A549 (cell line): ENCODE measurements at regions of chr17 and their contacts with region 1.

Region 1: DNA sequence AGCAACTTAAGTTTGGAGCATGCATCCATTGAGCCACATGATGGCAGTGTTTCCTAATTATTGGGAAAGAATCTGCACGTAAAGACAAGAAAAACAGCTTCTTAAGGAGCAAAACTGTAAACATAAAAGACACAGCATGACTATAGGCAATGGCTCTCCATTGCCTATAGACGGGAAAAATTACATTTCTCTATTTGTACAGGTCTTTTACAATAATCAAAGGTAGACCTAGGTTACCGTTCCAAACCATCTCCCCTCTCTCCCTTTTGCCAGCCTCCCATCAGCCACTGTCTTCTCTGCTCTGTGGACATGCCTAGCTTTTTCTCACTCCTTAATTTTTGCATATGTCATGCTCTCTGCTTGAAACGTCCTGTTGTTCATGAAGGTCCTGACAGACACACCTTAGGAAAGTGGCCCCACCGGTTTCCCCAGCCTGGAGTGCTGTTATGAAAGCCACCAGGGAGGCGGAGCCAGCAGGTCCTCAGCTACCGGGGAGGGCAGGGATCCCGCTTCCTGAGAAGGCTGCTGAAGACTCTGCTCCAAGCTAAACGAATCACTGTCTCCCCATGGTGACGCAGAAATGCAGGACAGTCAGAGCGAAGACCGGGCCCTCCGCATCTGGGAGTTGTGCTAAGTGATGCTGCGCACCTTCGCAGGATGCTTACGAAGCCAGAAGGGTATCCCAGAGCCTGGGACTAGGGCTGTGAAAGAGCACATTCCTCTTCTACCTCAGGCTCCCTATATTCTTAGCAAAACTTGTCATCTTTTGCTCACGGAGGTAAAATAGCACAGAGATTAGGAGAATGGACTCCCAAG is 2.2 kb upstream of the SLC16A11 start:
- DNase-seq: peak; percentile 76 to 91
- ATAC-seq: peak; percentile 51 to 69
- H3K4me3 ChIP-seq: no peak overlapping the region
- H3K27ac ChIP-seq: peak overlapping the region in 1 of 2 experiments; percentile 12; a peak in 1 of 6 replicates
- H3K4me1 ChIP-seq: peaks cover 19% of the 10 kb centered on the region
- CTCF ChIP-seq: peak; percentile 99
- EP300 ChIP-seq: no peak
- POLR2A ChIP-seq: no peak
- RAD21 ChIP-seq: peak; percentile 98 to 99

Region 2: GRCh38 chr17:7014261-7014994 is 31.7 kb before region 1 on chr17:
- CTCF ChIA-PET with region 1: interaction called, 10 read pairs
- POLR2A ChIA-PET with region 1: no interaction called
- DNase-seq: peak; percentile 96 to 98
- ATAC-seq: peak; percentile 83 to 92
- H3K4me3 ChIP-seq: peak overlapping the region; percentile 81
- H3K27ac ChIP-seq: peak overlapping the region; percentile 90 to 99
- H3K4me1 ChIP-seq: peaks cover 25% of the 10 kb centered on the region
- CTCF ChIP-seq: peak; percentile 87
- EP300 ChIP-seq: no peak
- POLR2A ChIP-seq: peak; percentile 89
- RAD21 ChIP-seq: peak in 1 of 2 experiments; percentile 61; a peak in 3 of 5 replicates

Region 3: GRCh38 chr17:7035591-7036368 is 10.3 kb before region 1 on chr17 and contains the start of gene SLC16A13:
- CTCF ChIA-PET with region 1: interaction called, 132 read pairs
- POLR2A ChIA-PET with region 1: interaction called, 13 read pairs
- DNase-seq: peak; percentile 99 to 100
- ATAC-seq: peak; percentile 93 to 97
- H3K4me3 ChIP-seq: peak within 1 kb of the TSS; percentile 85
- H3K27ac ChIP-seq: peak within 1 kb of the TSS; percentile 86 to 97
- H3K4me1 ChIP-seq: peaks cover 13% of the 10 kb centered on the region; the same call in 2 of the 3 replicates
- CTCF ChIP-seq: no peak
- EP300 ChIP-seq: no peak
- POLR2A ChIP-seq: peak; percentile 96
- RAD21 ChIP-seq: no peak
- polyA plus RNA-seq, gene SLC16A13: 6.2 and 8.0 TPM in 2 replicates

Region 4: GRCh38 chr17:7095625-7096024 is 49.5 kb after region 1 on chr17:
- CTCF ChIA-PET with region 1: interaction called, 11 read pairs
- POLR2A ChIA-PET with region 1: no interaction called
- DNase-seq: no peak
- ATAC-seq: no peak
- H3K4me3 ChIP-seq: no peak overlapping the region
- H3K27ac ChIP-seq: no peak overlapping the region
- H3K4me1 ChIP-seq: peaks cover 6% of the 10 kb centered on the region
- CTCF ChIP-seq: no peak
- EP300 ChIP-seq: no peak
- POLR2A ChIP-seq: no peak
- RAD21 ChIP-seq: no peak

Region 5: DNA sequence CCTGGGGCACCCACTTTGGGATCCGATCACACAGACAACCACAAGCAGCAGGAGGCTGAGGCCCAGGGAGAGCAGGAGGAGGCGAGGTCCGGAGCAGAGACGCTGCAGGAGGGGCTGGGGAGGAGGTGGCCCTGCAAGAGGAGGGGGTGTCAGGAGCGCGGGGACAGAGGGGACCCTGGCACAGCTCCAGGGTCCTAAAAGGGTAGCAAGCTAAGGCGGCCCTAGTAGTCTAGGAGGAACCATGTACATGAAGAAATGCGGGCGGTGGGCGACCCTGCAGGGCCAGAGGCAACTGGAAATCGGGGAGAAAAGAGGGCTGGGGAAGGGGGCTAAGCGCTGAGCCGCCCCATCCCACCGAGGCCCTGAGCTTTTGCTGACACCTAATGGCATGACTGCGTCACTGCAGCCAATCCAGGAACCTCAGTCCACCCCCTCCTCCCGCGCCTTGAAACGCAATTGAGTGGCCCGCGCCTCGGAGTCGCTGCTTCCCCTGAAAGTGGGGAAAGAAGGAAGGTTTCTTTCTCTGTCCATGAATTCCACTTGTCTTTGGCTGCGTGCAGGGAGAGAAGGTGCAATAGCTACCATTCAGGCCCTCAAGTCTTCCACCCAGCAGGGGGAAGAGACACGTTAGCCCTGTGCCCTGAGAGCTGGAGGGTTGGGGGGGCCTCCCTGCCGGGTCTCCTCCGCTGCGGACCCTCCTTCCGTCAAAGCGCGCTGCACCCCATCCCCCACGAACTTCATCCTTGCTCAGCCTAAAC is 131.3 kb after region 1 on chr17:
- CTCF ChIA-PET with region 1: interaction called, 314 read pairs
- POLR2A ChIA-PET with region 1: interaction called, 7 read pairs
- DNase-seq: peak; percentile 72 to 95
- ATAC-seq: peak; percentile 84 to 92
- H3K4me3 ChIP-seq: peak overlapping the region; percentile 54
- H3K27ac ChIP-seq: peak overlapping the region; percentile 67 to 88
- H3K4me1 ChIP-seq: peaks cover 23% of the 10 kb centered on the region
- CTCF ChIP-seq: peak; percentile 88
- EP300 ChIP-seq: no peak
- POLR2A ChIP-seq: no peak
- RAD21 ChIP-seq: peak; percentile 90 to 94

Region 6: DNA sequence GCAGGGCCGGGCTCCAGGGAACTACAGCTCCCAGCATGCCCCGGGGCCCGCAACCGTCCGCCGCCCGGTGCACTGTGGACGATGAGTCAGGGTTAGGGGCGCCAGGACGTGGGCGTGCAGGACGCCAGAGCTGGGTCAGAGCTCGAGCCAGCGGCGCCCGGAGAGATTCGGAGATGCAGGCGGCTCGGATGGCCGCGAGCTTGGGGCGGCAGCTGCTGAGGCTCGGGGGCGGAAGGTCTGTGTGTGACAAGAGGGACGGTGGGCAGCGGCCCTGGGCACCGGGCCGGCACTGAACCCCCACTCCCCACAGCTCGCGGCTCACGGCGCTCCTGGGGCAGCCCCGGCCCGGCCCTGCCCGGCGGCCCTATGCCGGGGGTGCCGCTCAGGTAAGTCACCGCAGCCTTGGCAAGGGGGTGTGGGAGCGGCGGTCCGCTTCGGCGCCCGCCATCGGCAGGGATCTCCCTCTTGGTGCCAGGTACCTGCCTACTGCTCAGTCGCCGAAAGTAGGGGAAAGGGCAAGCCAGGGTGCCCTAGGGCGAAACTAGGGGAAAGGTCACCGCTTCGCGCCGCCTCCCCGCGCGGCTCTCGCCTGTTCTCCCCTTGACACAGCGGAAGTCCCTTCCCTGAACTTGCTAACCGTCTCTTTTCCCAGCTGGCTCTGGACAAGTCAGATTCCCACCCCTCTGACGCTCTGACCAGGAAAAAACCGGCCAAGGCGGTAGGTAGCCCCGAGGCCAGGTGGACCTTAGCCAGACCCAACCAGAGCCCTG is 173.9 kb after region 1 on chr17 and contains the starts of genes ACADVL and DLG4:
- CTCF ChIA-PET with region 1: interaction called, 24 read pairs
- POLR2A ChIA-PET with region 1: interaction called, 5 read pairs
- DNase-seq: peak; percentile 82 to 96
- ATAC-seq: peak; percentile 54 to 82
- H3K4me3 ChIP-seq: peak within 1 kb of the TSS; percentile 74
- H3K27ac ChIP-seq: peak within 1 kb of the TSS; percentile 88 to 98
- H3K4me1 ChIP-seq: peaks cover 51% of the 10 kb centered on the region
- CTCF ChIP-seq: no peak
- EP300 ChIP-seq: no peak
- POLR2A ChIP-seq: peak; percentile 88
- RAD21 ChIP-seq: no peak
- polyA plus RNA-seq, gene ACADVL: 238 and 288 TPM in 2 replicates
- polyA plus RNA-seq, gene DLG4: 8.3 and 9.2 TPM in 2 replicates

Region 7: DNA sequence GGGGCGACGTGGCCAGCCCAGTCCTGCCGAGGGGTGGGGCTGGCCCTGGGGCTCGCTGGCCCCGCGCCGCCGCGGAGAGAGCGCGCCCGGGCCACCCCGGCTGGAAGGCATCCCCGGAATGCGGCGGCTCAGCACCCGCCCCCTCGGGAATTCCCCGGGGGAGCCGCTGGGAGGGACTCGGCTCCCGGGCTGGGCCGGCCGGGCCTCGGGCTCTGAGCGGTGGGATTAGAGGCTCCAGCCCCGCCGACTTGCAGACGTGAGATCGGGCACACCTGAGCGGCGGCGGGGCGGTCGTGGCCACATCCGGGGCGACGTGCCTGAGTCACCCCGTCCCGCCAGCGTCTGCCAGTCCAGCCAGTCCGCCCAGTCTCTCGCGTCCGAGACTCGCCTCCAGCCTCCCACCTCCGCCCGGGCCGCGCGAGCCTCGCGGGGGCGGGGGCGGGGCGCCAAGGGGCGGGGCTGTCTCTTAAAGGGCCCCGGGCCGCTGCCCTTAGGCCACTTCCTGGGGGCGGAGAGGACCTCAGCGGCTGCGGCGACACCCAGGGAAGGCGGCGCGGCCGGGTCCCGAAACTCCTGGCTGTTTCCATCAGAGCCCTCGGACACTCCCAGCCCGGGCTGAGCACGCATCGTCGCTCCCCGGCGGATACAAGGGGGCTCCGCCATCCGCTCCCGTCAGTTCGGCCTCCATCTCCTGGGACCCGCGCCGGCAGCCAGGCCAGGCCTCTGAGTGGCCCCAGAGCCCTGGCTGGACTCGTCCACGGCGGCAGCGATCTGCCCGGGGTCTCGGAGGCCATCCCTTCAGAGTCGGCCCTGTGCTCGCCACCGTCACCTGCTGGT is 305.8 kb after region 1 on chr17 and contains the start of gene KCTD11:
- CTCF ChIA-PET with region 1: interaction called, 41 read pairs
- POLR2A ChIA-PET with region 1: no interaction called
- DNase-seq: peak; percentile 91 to 96
- ATAC-seq: peak; percentile 57 to 79
- H3K4me3 ChIP-seq: peak within 1 kb of the TSS; percentile 70
- H3K27ac ChIP-seq: peak within 1 kb of the TSS; percentile 92 to 96
- H3K4me1 ChIP-seq: peaks cover 52% of the 10 kb centered on the region
- CTCF ChIP-seq: peak; percentile 60
- EP300 ChIP-seq: peak in 1 of 2 experiments; percentile 39; a peak in 1 of 5 replicates
- POLR2A ChIP-seq: peak; percentile 69
- RAD21 ChIP-seq: no peak
- polyA plus RNA-seq, gene KCTD11: 6.1 and 7.0 TPM in 2 replicates